Activated CD8-positive, alpha-beta T cell treated with anti-CD3 and anti-CD28 coated beads, Interleukin-2, amount 10 ng/mL, durations not matched to agents 7 days and 5 days (primary cell): ENCODE measurements at regions of chr18 and their contacts with region 1.

Region 1: DNA sequence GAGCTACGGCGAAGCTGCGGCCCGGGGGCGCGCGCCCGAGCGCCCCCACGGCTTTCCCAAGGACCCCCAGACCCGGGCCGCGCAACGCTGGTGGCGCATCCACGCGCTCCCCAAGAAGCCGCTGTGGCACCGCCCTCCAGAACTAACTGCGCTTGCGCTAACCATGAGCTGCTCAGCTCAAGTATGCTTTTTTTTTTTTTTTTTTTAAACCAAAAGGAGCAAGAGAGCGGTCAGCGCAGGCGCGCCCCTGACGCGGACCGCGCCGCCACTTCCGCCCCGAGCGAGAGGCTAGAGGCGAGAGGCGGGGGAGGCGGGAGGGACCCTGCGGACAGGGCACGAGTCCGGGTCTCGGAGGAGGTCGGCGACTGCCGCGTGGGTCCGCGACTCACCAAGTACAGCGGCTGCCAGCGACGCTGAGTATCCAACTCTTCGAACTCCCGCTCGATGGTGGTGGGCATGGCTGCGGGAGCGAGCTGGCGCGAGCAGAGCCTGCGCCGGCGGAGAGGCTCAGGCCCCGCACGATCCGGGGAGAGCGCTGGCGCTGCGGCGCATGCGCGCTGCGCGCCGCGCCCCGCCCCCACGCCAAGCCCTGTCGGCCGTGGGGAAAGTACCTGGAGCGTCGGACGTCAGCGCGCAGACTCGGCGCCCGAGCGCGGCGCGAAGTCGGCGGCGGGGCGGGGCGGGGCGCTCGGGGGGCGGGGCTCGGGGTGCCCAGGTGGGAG is at the start of gene PTPN2:
- DNase-seq: peak; percentile 95
- ATAC-seq: peak; percentile 88
- H3K4me3 Mint-ChIP-seq: peak within 1 kb of the TSS; percentile 95
- H3K27ac Mint-ChIP-seq: peak within 1 kb of the TSS; percentile 91
- H3K4me1 Mint-ChIP-seq: peaks cover 58% of the 10 kb centered on the region
- H3K27me3 Mint-ChIP-seq: no peaks in the 10 kb centered on the region
- total RNA-seq, gene PTPN2: 52.9 to 53.6 TPM

Region 2: DNA sequence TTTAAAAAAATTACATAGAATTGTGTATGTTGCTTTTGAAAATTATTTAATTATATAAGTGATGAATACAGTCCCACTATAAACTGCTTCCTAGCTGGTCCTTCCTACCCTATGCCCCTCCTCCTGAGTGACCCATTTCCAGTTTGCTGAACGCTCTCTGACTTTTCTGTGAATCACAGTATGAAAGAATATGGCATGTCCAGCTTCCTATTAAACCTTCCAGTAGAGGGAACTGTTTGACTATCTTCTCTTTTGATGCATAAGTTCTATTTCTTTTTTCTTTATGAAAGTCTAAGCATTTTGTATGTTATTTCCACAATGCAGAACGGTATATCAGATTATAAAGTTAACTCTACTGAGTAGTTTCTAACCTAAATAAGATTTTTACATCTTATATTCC is 139.7 kb before region 1 on chr18:
- CTCF ChIA-PET with region 1: interaction called, 15 read pairs
- POLR2A ChIA-PET with region 1: interaction called, 8 read pairs
- DNase-seq: no peak
- ATAC-seq: peak; percentile 63
- H3K4me3 Mint-ChIP-seq: no peak overlapping the region
- H3K27ac Mint-ChIP-seq: no peak overlapping the region
- H3K4me1 Mint-ChIP-seq: peaks cover 2% of the 10 kb centered on the region
- H3K27me3 Mint-ChIP-seq: no peaks in the 10 kb centered on the region

Region 3: DNA sequence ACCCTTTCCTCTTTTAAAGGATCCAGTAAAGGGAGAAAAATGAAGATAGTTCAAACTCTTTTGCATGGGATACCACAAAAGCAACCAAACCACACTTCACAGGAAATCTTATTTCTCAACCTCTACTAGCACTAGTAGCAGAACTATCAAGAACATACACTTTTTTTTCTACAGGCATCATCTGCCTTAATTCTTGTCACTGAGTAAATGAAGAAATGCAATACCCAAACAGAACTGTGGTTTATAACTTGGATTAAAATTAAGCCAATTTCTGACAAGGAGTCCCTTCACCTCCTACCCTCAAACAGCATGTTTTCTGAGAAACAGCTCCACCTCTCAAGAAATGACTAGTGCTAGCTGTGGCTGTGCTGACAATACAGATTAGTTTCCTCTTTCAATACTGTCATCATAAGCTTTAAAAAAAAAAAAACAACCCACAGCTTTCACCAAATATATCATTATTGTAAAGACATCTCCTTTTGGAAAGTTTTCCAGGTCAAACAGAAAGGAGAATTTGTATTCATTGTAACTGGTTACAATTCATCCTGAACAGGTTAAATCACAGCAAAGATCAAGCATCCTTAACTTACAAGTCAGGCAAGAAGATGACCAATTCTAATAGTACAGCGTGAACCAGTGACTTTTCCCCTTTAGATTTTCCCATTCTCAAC is 44.2 kb before region 1 on chr18:
- CTCF ChIA-PET with region 1: interaction called, 3 read pairs
- POLR2A ChIA-PET with region 1: interaction called, 17 read pairs
- DNase-seq: peak; percentile 71
- ATAC-seq: peak; percentile 84
- H3K4me3 Mint-ChIP-seq: peak overlapping the region; percentile 76
- H3K27ac Mint-ChIP-seq: peak overlapping the region; percentile 97
- H3K4me1 Mint-ChIP-seq: peaks cover 67% of the 10 kb centered on the region
- H3K27me3 Mint-ChIP-seq: no peaks in the 10 kb centered on the region